ENCODE measurements at regions of chr15 and their contacts with region 1.

Region 1: DNA sequence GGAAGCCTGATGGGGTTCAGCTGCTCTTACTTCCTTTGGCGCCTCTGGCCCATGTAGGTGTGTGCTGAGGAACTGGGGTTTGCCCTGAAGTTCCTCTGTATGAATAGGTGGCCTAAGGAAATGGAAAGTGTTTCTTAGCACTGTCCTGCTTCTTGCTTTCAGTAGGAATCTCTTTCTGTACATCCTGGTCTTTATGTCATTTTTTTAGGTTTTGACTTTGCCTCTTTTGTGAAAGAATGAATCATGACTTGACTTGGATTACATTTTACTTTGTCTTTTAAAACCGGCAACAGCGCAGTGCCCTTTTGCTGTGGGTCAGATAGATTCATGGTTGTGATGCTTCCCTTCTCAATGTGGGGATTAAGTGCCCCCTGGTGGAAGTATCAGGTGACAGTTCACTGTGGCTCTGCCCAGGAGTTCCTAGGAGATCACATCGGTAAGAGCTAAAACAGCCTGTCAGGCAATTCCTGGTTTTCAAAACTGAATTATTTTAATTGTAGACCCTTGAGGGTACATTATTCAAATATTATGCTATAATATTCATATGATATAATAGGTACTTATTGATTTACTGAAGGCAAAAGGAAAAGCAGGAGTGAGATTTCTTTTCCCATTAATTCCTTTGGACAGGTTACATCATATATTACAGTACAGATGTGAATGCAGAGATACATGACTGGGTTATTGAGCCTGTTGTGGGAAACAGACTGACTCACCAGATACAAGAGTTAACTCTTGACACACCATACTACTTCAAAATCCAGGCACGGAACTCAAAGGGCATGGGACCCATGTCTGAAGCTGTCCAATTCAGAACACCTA is 95.4 kb downstream of the HCN4 start:
- DNase-seq: peak; percentile 48
- CTCF ChIP-seq: peak; percentile 65

Region 2: GRCh38 chr15:73233623-73234022 is 39.8 kb before region 1 on chr15:
- CTCF ChIA-PET with region 1: interaction called, 10 read pairs
- POLR2A ChIA-PET with region 1: no interaction called
- DNase-seq: no peak
- CTCF ChIP-seq: no peak

Region 3: GRCh38 chr15:73240866-73241499 is 32.4 kb before region 1 on chr15:
- CTCF ChIA-PET with region 1: interaction called, 140 read pairs
- POLR2A ChIA-PET with region 1: no interaction called
- DNase-seq: peak; percentile 45
- CTCF ChIP-seq: peak; percentile 84

Region 4: GRCh38 chr15:73258271-73259108 is 14.9 kb before region 1 on chr15:
- CTCF ChIA-PET with region 1: interaction called, 45 read pairs
- POLR2A ChIA-PET with region 1: no interaction called
- DNase-seq: no peak
- CTCF ChIP-seq: no peak